Dorsolateral prefrontal cortex (tissue), 120 donors: ENCODE measurements at regions of chr14 and their contacts with region 1.

Region 1: DNA sequence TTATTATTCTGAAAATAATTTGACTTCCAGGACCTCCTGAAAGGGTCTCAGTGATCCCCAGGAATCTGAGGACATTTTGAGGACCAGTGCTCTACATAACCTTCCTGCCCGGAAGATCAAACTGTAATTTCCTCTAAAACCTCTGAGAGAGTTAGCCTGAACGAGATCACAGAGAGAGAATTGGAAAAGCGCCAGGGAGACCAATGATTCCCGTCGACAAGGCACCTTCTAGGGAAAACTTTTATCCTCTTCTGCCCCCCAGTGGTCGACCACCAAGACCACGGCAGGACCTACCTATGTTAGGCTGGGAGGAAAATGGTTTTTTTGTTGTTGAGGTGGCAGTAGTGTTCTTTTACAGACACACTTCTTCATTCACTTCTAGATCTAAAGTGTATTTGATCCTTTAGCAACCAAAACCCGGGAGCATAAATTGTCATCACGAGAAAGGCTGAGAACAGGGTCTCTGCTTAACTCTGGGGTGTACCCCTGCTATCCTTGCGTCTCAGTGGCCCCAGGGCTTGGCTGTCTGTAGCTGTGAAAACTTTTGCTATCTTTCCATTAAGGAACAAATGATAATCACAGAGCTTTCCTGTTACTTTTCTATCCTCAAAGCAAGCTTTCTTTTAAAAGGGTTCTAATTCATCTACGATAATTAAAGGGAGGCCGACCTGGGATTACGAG is 62.9 kb upstream of the NID2 start:
- DNase-seq: peak in 9 of 10 donors; percentile 52 to 79 (median 64)
- H3K4me3 ChIP-seq: peak overlapping the region in 13 of 59 donors; percentile 3 to 46 (median 30)
- H3K27ac ChIP-seq: no peak overlapping the region
- H3K27me3 ChIP-seq: peaks cover 0 to 7% (median 0%) of the 10 kb centered on the region in 45 donors
- CTCF ChIP-seq: peak; percentile 58 to 93 (median 81)

Region 2: GRCh38 chr14:51957950-51958349 is 173.8 kb before region 1 on chr14:
- intact Hi-C with region 1: no loop called
- DNase-seq: no peak
- H3K4me3 ChIP-seq: no peak overlapping the region
- H3K27ac ChIP-seq: no peak overlapping the region
- H3K27me3 ChIP-seq: no peaks in the 10 kb centered on the region
- CTCF ChIP-seq: no peak

Region 3: DNA sequence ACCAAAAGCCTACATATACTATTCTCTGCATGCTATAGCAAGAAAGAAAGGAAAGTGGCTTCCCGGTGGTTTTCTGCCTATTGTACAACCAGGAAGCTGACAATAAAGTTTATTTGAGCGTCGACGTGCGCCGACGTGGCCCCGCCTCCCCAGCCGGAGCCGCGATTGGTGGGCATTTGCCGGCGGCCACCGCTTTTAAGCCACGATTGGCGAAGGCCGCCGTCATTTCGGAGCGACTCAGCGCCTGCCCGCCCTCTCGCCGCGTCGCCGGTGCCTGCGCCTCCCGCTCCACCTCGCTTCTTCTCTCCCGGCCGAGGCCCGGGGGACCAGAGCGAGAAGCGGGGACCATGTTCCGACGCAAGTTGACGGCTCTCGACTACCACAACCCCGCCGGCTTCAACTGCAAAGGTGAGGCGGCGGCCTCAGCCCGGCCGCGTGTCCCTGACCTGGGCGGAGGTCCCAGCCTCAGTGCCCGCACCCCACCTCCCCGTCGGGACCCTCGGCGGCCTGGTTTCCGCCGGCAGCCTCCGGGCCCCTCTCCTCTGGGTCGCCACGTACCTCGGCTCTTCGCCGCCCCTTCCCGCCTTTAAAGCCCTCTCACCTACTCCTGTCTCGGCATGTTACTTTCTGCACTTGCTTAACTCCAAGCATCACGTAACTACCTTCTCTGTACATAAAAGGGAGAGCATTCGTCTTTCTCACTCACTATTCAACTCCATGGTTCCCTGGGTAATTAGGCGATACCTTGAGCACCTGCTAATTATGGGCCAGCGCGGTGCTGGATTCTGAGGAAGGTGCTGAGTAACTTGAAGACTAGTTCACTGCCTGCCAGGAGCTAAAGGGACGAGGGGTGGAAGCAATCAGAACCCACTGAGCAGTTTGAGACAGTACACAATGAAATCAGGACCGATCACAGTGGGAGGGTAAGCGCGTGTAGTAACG is 142.2 kb before region 1 on chr14 and contains the start of gene RTRAF:
- intact Hi-C with region 1: loop called in 1 of 2 experiments (anchors 2 kb)
- DNase-seq: peak; percentile 88 to 98 (median 95)
- H3K4me3 ChIP-seq: peak within 1 kb of the TSS; percentile 68 to 100 (median 95)
- H3K27ac ChIP-seq: peak within 1 kb of the TSS; percentile 44 to 93 (median 81)
- H3K27me3 ChIP-seq: no peaks in the 10 kb centered on the region
- CTCF ChIP-seq: peak in 42 of 56 donors; percentile 8 to 64 (median 38)
- total RNA-seq, gene RTRAF: 37.8 to 99.0 (median 69.0) TPM

Region 4: DNA sequence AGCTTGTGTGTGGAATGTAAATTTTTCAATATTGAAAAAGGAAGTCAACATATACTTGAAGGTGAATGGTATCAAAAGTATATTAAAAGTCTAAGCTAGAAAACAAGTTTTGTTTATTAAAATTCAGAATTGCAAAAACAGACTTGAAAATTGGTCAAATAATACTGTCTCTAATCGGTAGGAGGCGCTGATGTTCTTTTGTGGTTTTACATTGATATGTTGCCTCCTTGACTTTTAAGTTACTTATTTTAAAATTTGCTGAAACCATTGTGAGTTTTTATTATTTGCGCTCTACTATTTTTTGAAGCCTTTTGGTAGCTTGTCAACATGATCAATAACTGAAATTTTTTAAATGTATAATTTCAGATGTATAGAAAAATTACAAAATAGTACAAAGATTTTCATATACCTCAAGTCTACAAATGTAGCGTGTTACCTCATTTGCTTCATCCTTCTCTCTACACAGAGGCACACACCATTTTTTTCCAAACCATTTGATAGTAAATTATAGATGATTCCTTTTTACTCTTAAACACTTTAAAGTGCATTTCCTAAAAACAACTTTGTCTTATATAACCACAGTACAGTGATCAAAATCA is 135.5 kb before region 1 on chr14:
- intact Hi-C with region 1: loop called (anchors 2 kb)
- DNase-seq: no peak
- H3K4me3 ChIP-seq: no peak overlapping the region
- H3K27ac ChIP-seq: peak overlapping the region in 12 of 59 donors; percentile 2 to 51 (median 17)
- H3K27me3 ChIP-seq: no peaks in the 10 kb centered on the region
- CTCF ChIP-seq: peak; percentile 53 to 90 (median 74)

Region 5: GRCh38 chr14:52015411-52016030 is 116.3 kb before region 1 on chr14:
- intact Hi-C with region 1: loop called in 1 of 2 experiments (anchors 5 kb)
- DNase-seq: peak in 8 of 10 donors; percentile 55 to 83 (median 76)
- H3K4me3 ChIP-seq: no peak overlapping the region
- H3K27ac ChIP-seq: peak overlapping the region; percentile 15 to 97 (median 91)
- H3K27me3 ChIP-seq: no peaks in the 10 kb centered on the region
- CTCF ChIP-seq: peak; percentile 21 to 84 (median 68)

Region 6: GRCh38 chr14:52068615-52069303 is 63.0 kb before region 1 on chr14 and contains the start of gene NID2:
- intact Hi-C with region 1: loop called in 1 of 2 experiments (anchors 5 kb)
- DNase-seq: peak; percentile 26 to 77 (median 66)
- H3K4me3 ChIP-seq: peak within 1 kb of the TSS; percentile 49 to 94 (median 72)
- H3K27ac ChIP-seq: peak within 1 kb of the TSS in 48 of 59 donors; percentile 4 to 87 (median 56)
- H3K27me3 ChIP-seq: peaks cover 0 to 18% (median 4%) of the 10 kb centered on the region in 45 donors
- CTCF ChIP-seq: peak in 9 of 56 donors; percentile 4 to 19 (median 9)
- total RNA-seq, gene NID2: 1.7 to 12.5 (median 4.5) TPM

Region 7: GRCh38 chr14:52075371-52075770 is 56.4 kb before region 1 on chr14:
- intact Hi-C with region 1: loop called (anchors 2 to 5 kb)
- DNase-seq: no peak
- H3K4me3 ChIP-seq: no peak overlapping the region
- H3K27ac ChIP-seq: no peak overlapping the region
- H3K27me3 ChIP-seq: peaks cover 0 to 3% (median 0%) of the 10 kb centered on the region in 45 donors
- CTCF ChIP-seq: no peak

Region 8: GRCh38 chr14:52380294-52380693 is 248.5 kb after region 1 on chr14:
- intact Hi-C with region 1: no loop called
- DNase-seq: no peak
- H3K4me3 ChIP-seq: no peak overlapping the region
- H3K27ac ChIP-seq: no peak overlapping the region
- H3K27me3 ChIP-seq: no peaks in the 10 kb centered on the region
- CTCF ChIP-seq: no peak

Region 9: GRCh38 chr14:52755607-52756253 is 624.0 kb after region 1 on chr14:
- intact Hi-C with region 1: no loop called
- DNase-seq: no peak
- H3K4me3 ChIP-seq: no peak overlapping the region
- H3K27ac ChIP-seq: no peak overlapping the region
- H3K27me3 ChIP-seq: no peaks in the 10 kb centered on the region
- CTCF ChIP-seq: no peak